Endothelial cell of umbilical vein (primary cell): ENCODE measurements at regions of chr11 and their contacts with region 1.

Region 1: DNA sequence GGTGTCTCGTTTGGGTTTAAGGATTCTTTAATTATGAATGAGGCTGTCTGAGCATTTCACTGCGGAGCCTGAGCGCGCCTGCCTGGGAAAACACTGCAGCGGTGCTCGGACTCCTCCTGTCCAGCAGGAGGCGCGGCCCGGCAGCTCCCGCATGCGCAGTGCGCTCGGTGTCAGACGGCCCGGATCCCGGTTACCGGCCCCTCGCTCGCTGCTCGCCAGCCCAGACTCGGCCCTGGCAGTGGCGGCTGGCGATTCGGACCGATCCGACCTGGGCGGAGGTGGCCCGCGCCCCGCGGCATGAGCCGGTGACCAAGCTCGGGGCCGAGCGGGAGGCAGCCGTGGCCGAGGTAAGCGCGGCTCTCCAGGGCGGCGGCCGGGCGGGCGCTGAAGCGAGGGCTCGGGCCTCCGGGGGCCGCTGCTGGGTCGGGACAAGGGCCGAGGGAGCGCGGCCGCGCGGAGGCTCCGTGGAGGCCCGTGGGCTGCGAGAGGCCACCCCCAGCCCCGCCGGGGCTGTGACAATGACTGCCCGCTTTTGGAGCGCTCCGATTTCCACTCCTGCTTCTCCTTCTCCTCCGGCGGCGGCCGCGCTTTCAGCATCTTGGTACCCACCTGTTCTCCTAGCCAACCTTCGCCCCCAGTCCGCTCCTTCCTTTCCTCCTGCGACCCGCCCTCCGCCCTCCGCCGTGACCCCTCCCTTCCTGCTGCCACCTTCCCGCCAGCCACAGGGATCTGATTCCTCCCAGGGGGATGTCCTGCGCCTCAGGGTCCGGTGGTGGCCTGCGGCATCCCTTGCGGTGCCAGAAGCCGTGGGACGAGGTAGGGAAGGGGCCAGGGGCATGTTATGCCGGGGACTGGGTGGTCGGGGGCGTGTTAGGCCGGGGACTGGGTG is at the start of gene EXT2:
- DNase-seq: peak; percentile 84
- H3K4me3 ChIP-seq: peak within 1 kb of the TSS; percentile 49 to 75 (median 62)
- H3K27ac ChIP-seq: no peak within 1 kb of the TSS
- H3K4me1 ChIP-seq: peaks cover 13% of the 10 kb centered on the region
- H3K27me3 ChIP-seq: peaks cover 21 to 27% of the 10 kb centered on the region in 2 experiments
- CTCF ChIP-seq: peak; percentile 89 to 94
- POLR2A ChIP-seq: peak; percentile 50
- total RNA-seq, gene EXT2: 50.9 and 65.1 TPM in 2 replicates

Region 2: GRCh38 chr11:43895601-43896000 is 200.1 kb before region 1 on chr11:
- CTCF ChIA-PET with region 1: interaction called, 4 read pairs
- POLR2A ChIA-PET with region 1: no interaction called
- dilution Hi-C with region 1: no loop called
- intact Hi-C with region 1: loop called (anchors 2 kb)
- DNase-seq: no peak
- H3K4me3 ChIP-seq: no peak overlapping the region
- H3K27ac ChIP-seq: no peak overlapping the region
- H3K4me1 ChIP-seq: peaks cover 15% of the 10 kb centered on the region
- H3K27me3 ChIP-seq: no peaks in the 10 kb centered on the region
- CTCF ChIP-seq: no peak
- POLR2A ChIP-seq: no peak

Region 3: DNA sequence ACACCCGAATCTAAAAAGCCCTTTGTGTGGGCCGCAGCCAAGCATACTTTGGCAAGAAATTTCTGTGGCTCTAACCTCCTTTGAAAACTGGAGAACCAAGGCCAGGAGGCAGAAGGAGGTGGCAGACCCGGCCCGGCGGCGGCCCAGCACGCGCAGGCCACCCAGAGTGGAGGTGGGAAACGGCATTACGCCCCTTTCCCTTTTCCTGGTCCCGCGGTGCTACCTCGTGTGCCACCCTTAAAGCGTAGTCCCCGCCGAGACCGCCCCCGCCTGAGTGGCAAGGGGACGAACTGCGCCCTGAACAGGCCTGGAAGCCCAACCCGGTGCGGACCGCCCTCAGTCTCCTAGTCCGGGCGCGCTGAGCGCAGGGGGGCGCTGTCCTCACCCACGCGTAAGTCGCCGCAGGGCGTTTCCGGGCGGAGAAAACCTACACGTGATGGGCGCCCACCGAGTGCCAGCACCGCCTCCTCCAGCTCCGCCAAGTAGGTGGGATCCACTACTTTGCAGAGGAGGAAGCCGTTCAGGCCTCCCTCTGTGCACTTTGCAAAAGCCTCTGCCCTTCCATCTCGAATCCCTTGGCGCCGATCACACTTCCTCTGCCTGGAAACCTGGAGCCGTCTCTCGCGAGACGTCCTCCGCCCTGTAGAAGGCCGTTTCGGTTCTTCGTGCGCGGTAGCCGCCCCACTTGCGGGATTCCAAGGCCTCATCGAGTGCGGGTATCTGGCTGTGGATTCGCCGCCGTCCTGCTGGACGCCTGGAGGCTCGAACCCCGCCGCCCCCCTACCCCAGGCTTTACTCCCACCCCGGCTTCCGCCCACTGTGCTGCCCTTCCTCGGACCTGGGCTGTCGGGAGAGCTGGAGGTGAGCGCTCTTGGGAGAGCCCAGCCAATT is 29.7 kb before region 1 on chr11 and contains the start of gene ACCS:
- CTCF ChIA-PET with region 1: interaction called, 26 read pairs
- POLR2A ChIA-PET with region 1: no interaction called
- dilution Hi-C with region 1: no loop called
- intact Hi-C with region 1: loop called (anchors 1 kb)
- DNase-seq: peak; percentile 95
- H3K4me3 ChIP-seq: peak within 1 kb of the TSS; percentile 70 to 75 (median 74)
- H3K27ac ChIP-seq: peak within 1 kb of the TSS; percentile 77
- H3K4me1 ChIP-seq: peaks cover 10% of the 10 kb centered on the region
- H3K27me3 ChIP-seq: peaks cover 0 to 4% of the 10 kb centered on the region in 2 experiments
- CTCF ChIP-seq: peak; percentile 91 to 94
- POLR2A ChIP-seq: peak; percentile 82
- total RNA-seq, gene ACCS: 8.6 and 10.0 TPM in 2 replicates

Region 4: DNA sequence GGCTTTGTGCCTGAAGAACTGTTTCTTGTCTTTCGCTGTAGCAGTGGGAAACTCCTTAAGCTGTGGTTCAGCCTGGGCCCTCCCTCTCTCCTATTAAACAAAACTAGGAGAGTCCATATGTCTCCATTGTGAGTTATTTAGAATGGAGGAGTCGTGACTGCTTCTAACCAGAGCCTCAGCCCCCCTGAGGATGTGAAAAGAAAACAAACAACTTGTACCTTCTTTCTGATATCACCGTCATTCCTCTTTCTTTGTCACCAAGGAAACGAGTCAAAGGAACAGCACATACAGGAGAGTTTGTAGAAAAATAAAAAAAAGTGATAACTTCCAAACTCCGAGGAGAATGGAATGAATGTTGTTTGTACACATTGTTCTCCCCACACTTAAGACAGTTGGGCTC is 11.8 kb before region 1 on chr11:
- CTCF ChIA-PET with region 1: interaction called, 45 read pairs
- POLR2A ChIA-PET with region 1: no interaction called
- dilution Hi-C with region 1: no loop called
- intact Hi-C with region 1: no loop called
- DNase-seq: no peak
- H3K4me3 ChIP-seq: no peak overlapping the region
- H3K27ac ChIP-seq: no peak overlapping the region
- H3K4me1 ChIP-seq: no peaks in the 10 kb centered on the region
- H3K27me3 ChIP-seq: peaks cover 17 to 36% of the 10 kb centered on the region in 2 experiments
- CTCF ChIP-seq: no peak
- POLR2A ChIP-seq: no peak

Region 5: DNA sequence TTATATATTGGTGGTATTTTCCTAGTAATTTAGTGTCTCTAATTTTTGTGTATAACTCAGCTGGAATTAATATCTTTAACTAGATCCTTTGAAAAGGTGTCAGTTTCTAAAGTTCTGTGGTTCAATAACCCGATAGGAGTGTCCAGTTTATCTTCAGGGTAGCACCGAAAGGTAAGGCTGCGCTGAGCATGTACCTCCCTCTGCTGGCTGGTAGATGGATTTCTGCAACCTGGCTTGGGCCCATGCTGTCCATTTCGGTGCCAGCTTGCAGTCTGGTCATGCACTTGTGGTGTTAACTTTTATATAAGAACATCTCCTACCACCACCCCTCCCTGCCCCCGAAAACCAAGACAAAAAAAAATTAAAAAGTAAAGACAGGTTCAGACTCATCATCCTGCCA is 24.4 kb after region 1 on chr11:
- CTCF ChIA-PET with region 1: interaction called, 11 read pairs
- POLR2A ChIA-PET with region 1: no interaction called
- dilution Hi-C with region 1: no loop called
- intact Hi-C with region 1: no loop called
- DNase-seq: no peak
- H3K4me3 ChIP-seq: no peak overlapping the region
- H3K27ac ChIP-seq: no peak overlapping the region
- H3K4me1 ChIP-seq: peaks cover 1% of the 10 kb centered on the region
- H3K27me3 ChIP-seq: no peaks in the 10 kb centered on the region
- CTCF ChIP-seq: peak; percentile 12 to 23
- POLR2A ChIP-seq: no peak

Region 6: GRCh38 chr11:44133335-44133946 is 37.7 kb after region 1 on chr11:
- CTCF ChIA-PET with region 1: interaction called, 35 read pairs
- POLR2A ChIA-PET with region 1: no interaction called
- dilution Hi-C with region 1: no loop called
- intact Hi-C with region 1: no loop called
- DNase-seq: peak; percentile 64
- H3K4me3 ChIP-seq: no peak overlapping the region
- H3K27ac ChIP-seq: no peak overlapping the region
- H3K4me1 ChIP-seq: no peaks in the 10 kb centered on the region
- H3K27me3 ChIP-seq: no peaks in the 10 kb centered on the region
- CTCF ChIP-seq: peak; percentile 60 to 71
- POLR2A ChIP-seq: no peak

Region 7: DNA sequence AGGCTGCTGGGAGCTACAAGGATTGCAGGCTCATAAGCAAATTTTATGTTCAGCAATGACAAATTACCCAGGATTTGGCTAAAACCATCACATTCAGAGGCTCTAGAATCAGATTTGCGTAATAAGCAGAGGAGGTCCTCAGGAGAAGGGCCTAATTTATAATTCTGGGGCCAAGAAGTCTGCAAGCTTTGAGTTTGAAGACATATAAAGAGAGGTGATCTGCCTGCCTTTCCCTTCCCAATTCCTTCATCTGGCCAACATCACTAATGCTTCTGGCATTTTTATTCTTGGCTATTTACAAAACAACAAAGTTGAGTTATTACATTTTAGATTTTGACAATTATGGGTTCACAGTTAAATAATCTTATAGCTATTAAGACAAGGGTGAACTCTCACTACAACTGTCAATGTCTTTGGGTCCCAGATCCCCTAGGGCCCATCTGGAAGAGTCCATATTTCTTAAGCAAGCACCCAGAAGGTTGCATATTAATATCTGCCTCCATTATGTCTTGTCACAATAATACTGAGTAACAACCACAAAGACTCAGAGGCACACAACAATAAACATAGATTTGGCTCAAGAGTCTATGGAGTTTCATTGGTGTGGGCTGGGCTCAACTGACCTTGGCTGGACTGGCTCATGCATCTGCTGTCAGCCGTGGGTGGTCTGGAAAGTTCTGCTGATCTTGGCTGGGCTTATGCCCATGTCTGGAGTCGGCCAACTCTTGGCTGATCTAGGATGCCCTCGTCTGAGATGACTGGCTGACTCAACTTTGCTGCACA is 402.5 kb after region 1 on chr11:
- CTCF ChIA-PET with region 1: no interaction called
- POLR2A ChIA-PET with region 1: no interaction called
- dilution Hi-C with region 1: no loop called
- intact Hi-C with region 1: no loop called
- DNase-seq: no peak
- H3K4me3 ChIP-seq: no peak overlapping the region
- H3K27ac ChIP-seq: no peak overlapping the region
- H3K4me1 ChIP-seq: no peaks in the 10 kb centered on the region
- H3K27me3 ChIP-seq: no peaks in the 10 kb centered on the region
- CTCF ChIP-seq: no peak
- POLR2A ChIP-seq: no peak

Region 8: GRCh38 chr11:44538375-44539054 is 442.8 kb after region 1 on chr11:
- CTCF ChIA-PET with region 1: interaction called, 96 read pairs
- POLR2A ChIA-PET with region 1: no interaction called
- dilution Hi-C with region 1: no loop called
- intact Hi-C with region 1: loop called (anchors 1 kb)
- DNase-seq: peak; percentile 72
- H3K4me3 ChIP-seq: no peak overlapping the region
- H3K27ac ChIP-seq: no peak overlapping the region
- H3K4me1 ChIP-seq: no peaks in the 10 kb centered on the region
- H3K27me3 ChIP-seq: peaks cover 4 to 5% of the 10 kb centered on the region in 2 experiments
- CTCF ChIP-seq: peak; percentile 91 to 95
- POLR2A ChIP-seq: no peak